Body of pancreas (tissue), 4 donors: ENCODE measurements at regions of chr2 and their contacts with region 1.

Region 1: DNA sequence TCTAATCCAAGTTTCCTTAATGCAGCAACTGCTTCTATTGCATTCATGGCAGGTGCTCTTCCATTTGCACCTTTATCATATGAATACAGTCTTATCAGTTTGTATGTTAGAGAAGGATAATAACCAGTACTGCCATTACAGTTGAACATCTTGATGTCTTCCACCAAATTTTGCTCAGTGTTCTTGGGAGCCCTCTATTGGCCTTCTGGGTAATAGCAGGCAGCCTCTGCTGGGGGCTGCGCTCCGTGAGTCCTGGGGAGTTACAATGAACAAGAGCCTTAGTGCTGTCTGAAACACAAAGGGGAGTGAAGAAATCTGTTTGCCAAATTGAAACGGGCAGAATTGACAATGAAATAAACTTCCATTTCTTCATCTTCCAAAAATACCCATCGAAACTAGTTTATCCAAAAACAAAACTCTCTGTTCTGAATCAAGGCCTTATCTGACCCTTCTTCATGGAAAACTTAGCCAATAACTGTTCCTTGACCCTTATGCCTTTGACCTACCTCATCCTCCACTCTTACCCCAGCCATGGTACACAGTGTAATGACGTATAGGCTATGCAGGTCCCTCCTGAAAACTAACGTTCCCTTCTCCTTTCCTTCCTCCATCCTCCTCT is 79.9 kb downstream of the ALK start:
- DNase-seq: peak; percentile 16 to 40 (median 26)
- ATAC-seq: peak; percentile 68
- H3K4me3 ChIP-seq: no peak overlapping the region
- H3K27ac ChIP-seq: no peak overlapping the region
- H3K4me1 ChIP-seq: peaks cover 4% of the 10 kb centered on the region
- H3K27me3 ChIP-seq: no peaks in the 10 kb centered on the region
- CTCF ChIP-seq: peak; percentile 62 to 89 (median 83)
- POLR2A ChIP-seq: no peak

Region 2: DNA sequence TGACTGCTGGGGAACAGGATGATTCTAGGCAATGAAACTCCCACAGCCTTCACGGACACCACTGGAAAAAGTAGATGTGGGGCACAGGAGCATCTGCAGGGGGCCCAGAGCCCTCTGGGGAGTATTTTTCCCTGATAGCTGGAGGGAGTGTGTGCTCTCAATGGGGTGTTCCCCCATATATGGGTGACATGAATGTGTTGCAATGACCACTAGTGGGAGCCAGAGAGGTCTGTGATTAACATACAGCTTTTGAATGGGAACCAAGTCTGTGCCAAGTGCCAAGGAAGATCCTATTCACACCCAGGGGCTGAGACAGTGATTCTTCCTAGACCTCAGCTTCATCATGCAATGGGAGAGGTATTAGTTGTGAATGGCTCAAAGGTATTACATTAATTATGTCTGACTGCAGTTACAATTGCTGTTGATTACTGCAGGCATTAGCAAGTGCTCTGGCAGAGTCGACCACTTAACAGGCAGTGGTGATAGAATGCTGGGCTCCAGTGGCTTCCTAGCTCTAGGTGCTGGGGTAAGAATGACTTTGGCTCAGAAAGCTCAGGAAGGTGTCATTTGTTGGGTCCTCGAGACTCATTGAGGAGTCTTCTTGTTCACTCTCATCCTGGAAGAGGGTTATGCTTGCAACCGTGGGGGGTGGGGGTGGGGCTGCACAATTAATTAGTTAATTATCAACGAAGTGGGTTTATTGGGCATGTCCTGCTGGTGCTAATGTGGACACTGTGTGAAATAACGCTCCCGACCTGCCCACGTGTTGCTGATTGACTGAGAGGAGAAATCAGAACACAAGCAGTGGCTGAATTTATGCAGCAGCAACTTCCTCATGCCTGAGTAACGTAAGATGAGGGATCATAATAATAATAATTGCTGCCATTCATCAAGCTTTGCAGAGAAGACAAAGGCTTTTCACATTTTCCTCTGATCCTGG is 532.1 kb before region 1 on chr2:
- intact Hi-C with region 1: loop called (anchors 10 kb)
- DNase-seq: peak; percentile 65 to 85 (median 76)
- ATAC-seq: peak; percentile 72
- H3K4me3 ChIP-seq: no peak overlapping the region
- H3K27ac ChIP-seq: peak overlapping the region in 3 of 4 donors; percentile 3 to 75 (median 25)
- H3K4me1 ChIP-seq: peaks cover 32% of the 10 kb centered on the region
- H3K27me3 ChIP-seq: no peaks in the 10 kb centered on the region
- CTCF ChIP-seq: peak; percentile 55 to 81 (median 70)
- POLR2A ChIP-seq: no peak

Region 3: DNA sequence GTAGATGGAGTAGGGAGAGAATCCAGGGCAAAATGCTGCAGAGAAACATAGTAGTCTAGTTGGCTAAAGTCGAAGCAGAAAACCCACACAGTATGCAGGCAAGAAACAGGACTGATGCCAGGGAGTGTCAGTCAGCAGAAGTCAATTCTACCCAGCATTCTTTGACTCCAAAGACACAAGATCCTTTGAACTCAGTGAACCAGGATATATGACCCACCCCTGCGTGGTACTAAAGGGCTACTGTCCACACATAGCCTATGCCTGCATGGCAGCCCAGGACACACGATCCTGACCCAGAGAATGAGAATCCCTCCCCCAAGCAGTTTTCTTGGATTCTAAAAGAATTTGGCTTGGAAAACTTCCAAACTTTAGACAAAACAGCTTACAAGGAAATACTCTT is 37.4 kb after region 1 on chr2:
- intact Hi-C with region 1: no loop called
- DNase-seq: peak in 1 of 4 donors; percentile 4
- ATAC-seq: peak; percentile 63
- H3K4me3 ChIP-seq: no peak overlapping the region
- H3K27ac ChIP-seq: no peak overlapping the region
- H3K4me1 ChIP-seq: no peaks in the 10 kb centered on the region
- H3K27me3 ChIP-seq: no peaks in the 10 kb centered on the region
- CTCF ChIP-seq: no peak
- POLR2A ChIP-seq: no peak